Panc1 (cell line): ENCODE measurements at regions of chr11 and their contacts with region 1.

Region 1: DNA sequence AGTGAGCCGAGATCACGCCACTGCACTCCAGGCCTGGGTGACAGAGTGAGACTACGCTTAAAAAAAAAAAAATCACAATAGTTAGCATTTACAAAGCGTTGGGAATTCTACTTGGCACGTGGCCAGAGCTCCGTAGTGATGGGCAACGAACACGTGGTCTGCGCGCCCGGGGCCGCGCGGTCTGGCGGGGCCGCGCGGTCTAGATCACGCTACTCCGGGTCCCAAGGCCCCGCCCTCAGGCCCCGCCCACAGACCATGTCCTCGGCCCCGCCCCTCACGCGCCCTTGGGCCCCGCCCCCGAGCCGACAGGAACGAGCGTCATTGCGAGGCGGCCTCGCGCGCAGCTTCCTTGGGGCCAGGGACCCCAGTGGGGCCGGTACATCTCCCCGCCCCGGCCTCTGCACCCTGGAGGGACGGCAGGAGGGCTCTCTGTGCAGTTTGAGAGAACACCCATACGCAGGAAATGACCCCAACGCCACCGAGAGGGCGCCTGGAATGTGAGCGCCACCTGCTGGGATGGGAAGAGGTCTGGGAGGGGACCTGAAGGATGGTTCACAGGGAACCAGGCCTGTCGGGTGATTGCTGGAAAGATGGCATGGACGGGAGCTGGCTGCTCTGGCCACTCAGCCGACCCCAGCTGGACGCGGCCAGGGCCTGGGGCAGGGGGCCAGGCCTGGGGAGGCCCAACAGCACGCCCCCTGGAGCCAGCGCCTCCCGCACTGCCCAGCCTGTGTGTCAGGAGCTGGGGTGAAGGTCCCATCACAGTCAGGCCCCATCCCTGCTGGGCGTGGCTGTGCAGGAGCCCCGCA is 2.0 kb upstream of the PTDSS2 start:
- DNase-seq: peak; percentile 90
- ATAC-seq: peak; percentile 80
- H3K4me3 ChIP-seq: peak overlapping the region; percentile 52 to 82
- H3K27ac ChIP-seq: peak overlapping the region; percentile 72
- H3K4me1 ChIP-seq: peaks cover 38% of the 10 kb centered on the region
- H3K27me3 ChIP-seq: no peaks in the 10 kb centered on the region
- CTCF ChIP-seq: peak; percentile 100

Region 2: GRCh38 chr11:335779-336658 is 112.1 kb before region 1 on chr11:
- CTCF ChIA-PET with region 1: no interaction called
- POLR2A ChIA-PET with region 1: interaction called, 12 read pairs
- in situ Hi-C with region 1: no loop called
- intact Hi-C with region 1: no loop called
- DNase-seq: no peak
- ATAC-seq: peak; percentile 59
- H3K4me3 ChIP-seq: no peak overlapping the region
- H3K27ac ChIP-seq: peak overlapping the region; percentile 9; the same call in 1 of the 2 replicates
- H3K4me1 ChIP-seq: peaks cover 4% of the 10 kb centered on the region; the same call in 1 of the 2 replicates
- H3K27me3 ChIP-seq: no peaks in the 10 kb centered on the region
- CTCF ChIP-seq: no peak

Region 3: DNA sequence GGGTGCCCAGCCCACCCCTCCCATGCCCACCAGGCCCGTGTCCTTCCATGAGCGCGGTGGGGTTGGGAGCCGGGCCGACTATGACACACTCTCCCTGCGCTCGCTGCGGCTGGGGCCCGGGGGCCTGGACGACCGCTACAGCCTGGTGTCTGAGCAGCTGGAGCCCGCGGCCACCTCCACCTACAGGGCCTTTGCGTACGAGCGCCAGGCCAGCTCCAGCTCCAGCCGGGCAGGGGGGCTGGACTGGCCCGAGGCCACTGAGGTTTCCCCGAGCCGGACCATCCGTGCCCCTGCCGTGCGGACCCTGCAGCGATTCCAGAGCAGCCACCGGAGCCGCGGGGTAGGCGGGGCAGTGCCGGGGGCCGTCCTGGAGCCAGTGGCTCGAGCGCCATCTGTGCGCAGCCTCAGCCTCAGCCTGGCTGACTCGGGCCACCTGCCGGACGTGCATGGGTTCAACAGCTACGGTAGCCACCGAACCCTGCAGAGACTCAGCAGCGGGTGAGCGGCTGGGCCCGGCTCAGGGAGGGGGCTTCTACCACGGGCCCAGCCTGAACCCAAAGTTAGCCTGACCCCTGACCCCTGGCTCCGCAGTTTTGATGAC is 51.1 kb before region 1 on chr11:
- CTCF ChIA-PET with region 1: interaction called, 17 read pairs
- POLR2A ChIA-PET with region 1: no interaction called
- in situ Hi-C with region 1: no loop called
- intact Hi-C with region 1: loop called (anchors 5 kb)
- DNase-seq: no peak
- ATAC-seq: no peak
- H3K4me3 ChIP-seq: peak overlapping the region in 1 of 2 experiments; percentile 1; a peak in 1 of 4 replicates
- H3K27ac ChIP-seq: no peak overlapping the region
- H3K4me1 ChIP-seq: peaks cover 46% of the 10 kb centered on the region
- H3K27me3 ChIP-seq: no peaks in the 10 kb centered on the region
- CTCF ChIP-seq: peak; percentile 4; the same call in 1 of the 2 replicates

Region 4: DNA sequence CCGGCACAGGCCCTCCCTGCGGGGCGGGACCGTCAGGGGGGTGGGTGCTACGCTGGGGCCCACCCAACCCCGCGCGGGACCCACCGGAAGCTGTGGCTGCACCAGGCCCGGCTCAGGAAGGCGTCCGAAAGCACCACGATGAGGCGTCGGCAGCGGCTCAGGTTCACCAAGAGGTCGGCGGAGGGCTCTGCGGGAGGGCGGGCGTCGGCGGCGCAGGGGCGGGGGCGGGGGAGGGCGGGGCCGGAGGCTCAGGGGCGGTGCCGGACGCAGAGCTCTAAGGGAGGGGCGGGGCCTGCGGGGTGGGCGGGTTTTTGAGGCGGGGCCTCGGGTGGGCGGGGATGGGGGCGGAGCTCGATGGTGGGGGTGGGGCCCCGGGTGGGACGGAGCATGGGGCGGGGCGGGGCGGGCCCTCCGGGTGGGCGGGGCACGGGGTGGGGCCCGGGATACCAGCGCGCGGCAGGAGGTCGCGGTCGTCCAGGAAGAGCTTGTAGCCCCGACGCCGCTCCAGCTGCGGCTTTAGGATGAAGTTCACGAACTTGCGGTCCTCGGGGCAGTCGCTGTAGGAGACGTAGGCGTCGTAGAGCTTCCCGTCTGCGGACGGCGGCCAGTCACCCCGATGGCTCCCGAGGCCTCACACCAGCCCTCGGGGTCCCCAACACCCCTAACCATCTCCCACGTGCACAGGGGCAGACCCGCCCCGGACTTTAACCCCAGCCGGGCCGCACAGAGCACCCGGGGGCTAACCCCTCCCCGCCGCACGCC is 41.0 kb before region 1 on chr11:
- CTCF ChIA-PET with region 1: interaction called, 38 read pairs
- POLR2A ChIA-PET with region 1: interaction called, 11 read pairs
- in situ Hi-C with region 1: no loop called
- intact Hi-C with region 1: loop called (anchors 5 kb)
- DNase-seq: no peak
- ATAC-seq: peak; percentile 79
- H3K4me3 ChIP-seq: peak overlapping the region; percentile 79 to 84
- H3K27ac ChIP-seq: peak overlapping the region; percentile 85
- H3K4me1 ChIP-seq: peaks cover 30% of the 10 kb centered on the region
- H3K27me3 ChIP-seq: no peaks in the 10 kb centered on the region
- CTCF ChIP-seq: peak; percentile 31; the same call in 1 of the 2 replicates

Region 5: DNA sequence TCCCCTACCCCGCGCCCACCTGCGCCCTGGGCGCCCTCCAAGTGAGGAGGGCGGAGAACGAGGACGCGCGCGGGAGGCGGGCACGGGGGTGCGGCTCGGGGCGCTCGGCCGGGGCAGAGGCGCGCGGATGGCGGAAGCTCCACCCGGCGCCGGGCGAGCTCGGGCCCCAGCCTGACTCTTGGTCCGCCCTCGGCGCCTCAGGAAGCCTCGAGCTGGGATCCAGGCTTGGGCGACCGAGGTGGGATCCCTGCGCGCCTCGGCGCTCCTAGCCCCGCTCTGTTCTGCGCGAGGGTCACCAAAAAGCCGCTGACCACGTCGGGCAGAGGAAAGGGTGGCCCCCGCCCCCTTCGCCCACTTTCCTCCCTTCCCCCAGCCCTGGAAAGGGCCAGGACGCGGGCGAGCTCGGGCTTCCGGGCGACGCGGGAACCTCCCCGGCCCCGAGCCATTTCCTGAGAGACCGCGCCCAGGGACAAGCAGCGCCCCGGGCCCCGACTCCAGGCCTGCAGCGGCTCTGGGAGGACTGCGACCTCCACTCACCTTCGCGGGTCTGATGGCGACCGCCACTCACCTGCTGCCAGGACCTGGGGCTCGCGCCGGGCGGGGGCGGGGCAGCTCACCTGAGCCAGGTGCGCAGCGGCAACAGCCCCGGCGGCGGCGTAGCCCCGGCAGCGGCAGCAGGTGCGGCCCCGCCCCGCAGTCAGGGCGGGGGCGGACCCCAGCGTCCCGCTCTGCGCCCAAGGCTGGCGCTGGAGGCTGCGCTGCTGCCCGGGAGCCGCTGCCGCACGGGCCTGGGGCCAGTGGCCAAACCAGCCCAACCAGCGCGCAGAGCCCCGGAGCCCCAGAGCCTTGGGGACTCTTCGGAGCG is 31.1 kb before region 1 on chr11:
- CTCF ChIA-PET with region 1: interaction called, 29 read pairs
- POLR2A ChIA-PET with region 1: no interaction called
- in situ Hi-C with region 1: no loop called
- intact Hi-C with region 1: no loop called
- DNase-seq: no peak
- ATAC-seq: peak; percentile 43
- H3K4me3 ChIP-seq: peak overlapping the region; percentile 41 to 63
- H3K27ac ChIP-seq: peak overlapping the region; percentile 68
- H3K4me1 ChIP-seq: peaks cover 42% of the 10 kb centered on the region
- H3K27me3 ChIP-seq: no peaks in the 10 kb centered on the region
- CTCF ChIP-seq: no peak

Region 6: GRCh38 chr11:465896-466530 is 17.9 kb after region 1 on chr11:
- CTCF ChIA-PET with region 1: no interaction called
- POLR2A ChIA-PET with region 1: interaction called, 19 read pairs
- in situ Hi-C with region 1: no loop called
- intact Hi-C with region 1: no loop called
- DNase-seq: no peak
- ATAC-seq: no peak
- H3K4me3 ChIP-seq: no peak overlapping the region
- H3K27ac ChIP-seq: no peak overlapping the region
- H3K4me1 ChIP-seq: peaks cover 24% of the 10 kb centered on the region
- H3K27me3 ChIP-seq: no peaks in the 10 kb centered on the region
- CTCF ChIP-seq: no peak

Region 7: GRCh38 chr11:518463-519250 is 70.5 kb after region 1 on chr11:
- CTCF ChIA-PET with region 1: interaction called, 5 read pairs
- POLR2A ChIA-PET with region 1: no interaction called
- in situ Hi-C with region 1: no loop called
- intact Hi-C with region 1: loop called (anchors 5 kb)
- DNase-seq: peak; percentile 87
- ATAC-seq: peak; percentile 99
- H3K4me3 ChIP-seq: peak overlapping the region; percentile 35 to 73
- H3K27ac ChIP-seq: peak overlapping the region; percentile 77
- H3K4me1 ChIP-seq: peaks cover 6% of the 10 kb centered on the region; the same call in 1 of the 2 replicates
- H3K27me3 ChIP-seq: no peaks in the 10 kb centered on the region
- CTCF ChIP-seq: peak; percentile 100

Region 8: DNA sequence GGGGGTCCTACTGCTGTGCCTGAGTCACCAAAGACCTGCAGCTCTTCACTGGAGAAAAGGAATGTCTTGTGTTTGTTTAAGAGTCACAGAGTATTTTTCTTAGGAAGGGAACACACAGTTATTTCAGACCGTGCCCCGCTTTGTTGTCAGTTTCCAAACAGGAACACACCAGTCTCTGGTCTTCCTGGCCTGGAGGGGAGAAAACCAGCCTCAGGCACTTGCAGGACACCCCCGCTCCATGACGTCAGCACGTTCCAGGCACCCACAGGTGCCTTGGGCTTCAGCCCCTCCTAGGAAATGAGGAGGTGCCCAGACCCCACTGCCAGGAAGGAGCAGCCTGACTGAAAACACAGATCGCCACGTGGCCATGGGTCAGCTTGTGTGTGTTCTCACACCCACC is 241.5 kb after region 1 on chr11:
- CTCF ChIA-PET with region 1: no interaction called
- POLR2A ChIA-PET with region 1: no interaction called
- in situ Hi-C with region 1: no loop called
- intact Hi-C with region 1: no loop called
- DNase-seq: no peak
- ATAC-seq: no peak
- H3K4me3 ChIP-seq: no peak overlapping the region
- H3K27ac ChIP-seq: no peak overlapping the region
- H3K4me1 ChIP-seq: peaks cover 30% of the 10 kb centered on the region
- H3K27me3 ChIP-seq: no peaks in the 10 kb centered on the region
- CTCF ChIP-seq: no peak